Activated naive CD4-positive, alpha-beta T cell treated with anti-CD3 and anti-CD28 coated beads for 36 hours (primary cell): ENCODE measurements at regions of chr2 and their contacts with region 1.

Region 1: DNA sequence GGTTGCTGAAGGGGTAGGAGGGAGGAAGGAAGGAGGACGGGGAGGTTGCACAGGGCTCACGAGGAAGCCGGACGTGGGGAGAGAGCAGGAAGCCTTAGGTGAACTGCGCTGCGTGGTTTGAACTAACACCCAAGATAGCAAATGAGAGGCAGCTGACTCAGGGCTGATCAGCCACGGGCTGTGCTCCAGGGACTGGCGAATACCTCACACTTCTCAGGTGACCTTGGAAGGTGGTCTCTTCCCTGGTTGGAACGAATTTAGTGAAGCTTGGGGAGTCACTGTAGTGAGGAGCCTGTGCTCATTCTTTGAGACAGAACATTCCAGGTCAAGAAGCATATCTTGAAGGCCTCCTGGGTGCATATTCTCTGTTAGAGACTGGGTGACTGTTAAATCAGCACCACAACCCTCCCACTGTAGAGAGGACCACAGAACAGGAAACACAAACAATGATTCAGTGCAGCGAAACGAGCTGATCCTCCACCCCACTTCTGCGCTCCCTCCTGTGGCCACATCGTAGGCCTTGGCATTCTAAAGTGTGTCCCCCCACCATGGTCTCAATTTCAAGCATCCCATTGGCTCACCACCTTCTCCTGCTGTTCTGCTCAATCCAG is 33.8 kb downstream of the TOGARAM2 start:
- DNase-seq: peak; percentile 83
- H3K4me3 Mint-ChIP-seq: peak overlapping the region; percentile 80
- H3K27ac Mint-ChIP-seq: peak overlapping the region; percentile 90
- H3K4me1 Mint-ChIP-seq: peaks cover 76% of the 10 kb centered on the region
- H3K27me3 Mint-ChIP-seq: no peaks in the 10 kb centered on the region

Region 2: GRCh38 chr2:28030600-28030999 is 984.3 kb before region 1 on chr2:
- CTCF ChIA-PET with region 1: no interaction called
- intact Hi-C with region 1: loop called (anchors 10 kb)
- DNase-seq: no peak
- H3K4me3 Mint-ChIP-seq: no peak overlapping the region
- H3K27ac Mint-ChIP-seq: no peak overlapping the region
- H3K4me1 Mint-ChIP-seq: peaks cover 17% of the 10 kb centered on the region
- H3K27me3 Mint-ChIP-seq: no peaks in the 10 kb centered on the region

Region 3: DNA sequence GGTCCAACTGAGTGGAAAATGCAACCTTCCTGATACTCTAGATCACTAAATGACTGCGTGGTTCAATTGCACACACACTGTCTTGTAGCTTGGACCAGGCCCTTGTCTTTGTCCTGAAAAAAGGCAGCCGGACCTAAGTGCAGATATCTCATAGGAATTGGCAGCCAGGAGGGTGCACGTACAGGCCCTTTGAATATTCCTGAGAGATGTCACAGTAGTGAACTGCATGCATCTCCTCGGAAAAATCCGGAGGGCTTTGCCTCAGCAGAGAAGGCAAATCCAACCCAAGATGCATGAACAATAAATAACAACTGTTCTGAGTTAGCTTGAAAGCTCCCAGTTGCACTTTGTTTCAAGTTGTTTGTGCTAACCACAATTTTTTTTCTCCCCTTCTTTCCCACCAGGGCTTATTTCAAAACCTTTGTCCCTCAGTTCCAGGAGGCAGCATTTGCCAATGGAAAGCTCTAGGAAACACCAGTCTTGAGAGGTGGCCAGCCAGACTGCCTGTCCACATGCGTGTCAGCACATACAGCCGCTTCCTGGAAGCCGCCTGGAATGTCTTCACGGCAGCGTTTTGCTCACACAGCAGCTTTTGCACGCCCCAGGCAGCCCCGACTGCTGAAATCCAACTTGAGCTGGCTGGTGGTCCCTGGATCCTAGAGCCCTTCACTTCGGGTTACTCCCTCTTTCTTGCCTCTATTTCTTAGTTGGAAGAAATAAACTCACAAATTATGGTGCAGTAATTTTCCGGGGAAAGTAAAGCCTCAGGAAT is 676.7 kb before region 1 on chr2:
- CTCF ChIA-PET with region 1: no interaction called
- intact Hi-C with region 1: no loop called
- DNase-seq: no peak
- H3K4me3 Mint-ChIP-seq: no peak overlapping the region
- H3K27ac Mint-ChIP-seq: no peak overlapping the region
- H3K4me1 Mint-ChIP-seq: no peaks in the 10 kb centered on the region
- H3K27me3 Mint-ChIP-seq: no peaks in the 10 kb centered on the region

Region 4: GRCh38 chr2:28778392-28778791 is 236.5 kb before region 1 on chr2:
- CTCF ChIA-PET with region 1: no interaction called
- intact Hi-C with region 1: no loop called
- DNase-seq: no peak
- H3K4me3 Mint-ChIP-seq: no peak overlapping the region
- H3K27ac Mint-ChIP-seq: peak overlapping the region; percentile 10
- H3K4me1 Mint-ChIP-seq: peaks cover 37% of the 10 kb centered on the region
- H3K27me3 Mint-ChIP-seq: no peaks in the 10 kb centered on the region

Region 5: GRCh38 chr2:28821295-28821958 is 193.5 kb before region 1 on chr2:
- CTCF ChIA-PET with region 1: interaction called, 7 read pairs
- intact Hi-C with region 1: loop called (anchors 1 kb)
- DNase-seq: peak; percentile 81
- H3K4me3 Mint-ChIP-seq: no peak overlapping the region
- H3K27ac Mint-ChIP-seq: no peak overlapping the region
- H3K4me1 Mint-ChIP-seq: peaks cover 8% of the 10 kb centered on the region
- H3K27me3 Mint-ChIP-seq: no peaks in the 10 kb centered on the region

Region 6: DNA sequence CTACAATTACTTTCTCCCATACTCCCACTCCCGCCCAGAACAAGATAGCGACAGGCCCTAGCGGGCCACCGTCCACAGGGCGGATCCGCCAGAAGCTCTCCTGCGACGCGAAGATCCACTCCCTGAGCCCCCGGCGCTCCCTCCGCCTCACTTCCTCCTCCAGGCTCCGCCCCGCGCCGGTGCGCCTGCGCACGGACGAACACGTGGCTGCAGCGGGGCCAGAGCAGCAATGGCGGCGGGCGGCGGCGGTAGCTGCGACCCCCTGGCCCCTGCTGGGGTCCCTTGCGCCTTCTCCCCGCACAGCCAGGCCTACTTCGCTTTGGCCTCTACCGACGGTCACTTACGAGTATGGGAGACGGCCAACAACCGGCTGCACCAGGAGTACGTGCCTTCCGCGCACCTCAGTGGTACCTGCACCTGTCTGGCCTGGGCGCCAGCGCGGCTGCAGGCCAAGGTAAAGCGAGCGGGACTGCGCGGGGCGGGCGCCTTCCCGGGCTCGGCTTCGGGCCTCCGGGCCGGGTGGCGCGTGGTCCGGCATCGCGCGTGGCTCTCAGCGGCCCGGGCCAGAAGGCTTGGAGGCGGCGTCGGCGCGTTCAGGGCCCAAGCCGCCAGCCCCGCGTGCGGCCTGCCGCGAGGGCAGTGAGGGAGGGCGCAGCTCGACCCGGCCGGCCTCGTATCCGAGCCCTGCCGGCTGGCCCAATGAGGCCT is 120.3 kb before region 1 on chr2 and contains the start of gene WDR43:
- CTCF ChIA-PET with region 1: interaction called, 3 read pairs
- intact Hi-C with region 1: loop called (anchors 2 kb)
- DNase-seq: peak; percentile 97
- H3K4me3 Mint-ChIP-seq: peak within 1 kb of the TSS; percentile 100
- H3K27ac Mint-ChIP-seq: peak within 1 kb of the TSS; percentile 97
- H3K4me1 Mint-ChIP-seq: peaks cover 34% of the 10 kb centered on the region
- H3K27me3 Mint-ChIP-seq: no peaks in the 10 kb centered on the region
- total RNA-seq, gene WDR43: 76.5 to 78.7 TPM

Region 7: GRCh38 chr2:29000481-29000880 is 14.4 kb before region 1 on chr2:
- CTCF ChIA-PET with region 1: interaction called, 11 read pairs
- intact Hi-C with region 1: no loop called
- DNase-seq: peak; percentile 48
- H3K4me3 Mint-ChIP-seq: no peak overlapping the region
- H3K27ac Mint-ChIP-seq: no peak overlapping the region
- H3K4me1 Mint-ChIP-seq: peaks cover 16% of the 10 kb centered on the region
- H3K27me3 Mint-ChIP-seq: no peaks in the 10 kb centered on the region

Region 8: DNA sequence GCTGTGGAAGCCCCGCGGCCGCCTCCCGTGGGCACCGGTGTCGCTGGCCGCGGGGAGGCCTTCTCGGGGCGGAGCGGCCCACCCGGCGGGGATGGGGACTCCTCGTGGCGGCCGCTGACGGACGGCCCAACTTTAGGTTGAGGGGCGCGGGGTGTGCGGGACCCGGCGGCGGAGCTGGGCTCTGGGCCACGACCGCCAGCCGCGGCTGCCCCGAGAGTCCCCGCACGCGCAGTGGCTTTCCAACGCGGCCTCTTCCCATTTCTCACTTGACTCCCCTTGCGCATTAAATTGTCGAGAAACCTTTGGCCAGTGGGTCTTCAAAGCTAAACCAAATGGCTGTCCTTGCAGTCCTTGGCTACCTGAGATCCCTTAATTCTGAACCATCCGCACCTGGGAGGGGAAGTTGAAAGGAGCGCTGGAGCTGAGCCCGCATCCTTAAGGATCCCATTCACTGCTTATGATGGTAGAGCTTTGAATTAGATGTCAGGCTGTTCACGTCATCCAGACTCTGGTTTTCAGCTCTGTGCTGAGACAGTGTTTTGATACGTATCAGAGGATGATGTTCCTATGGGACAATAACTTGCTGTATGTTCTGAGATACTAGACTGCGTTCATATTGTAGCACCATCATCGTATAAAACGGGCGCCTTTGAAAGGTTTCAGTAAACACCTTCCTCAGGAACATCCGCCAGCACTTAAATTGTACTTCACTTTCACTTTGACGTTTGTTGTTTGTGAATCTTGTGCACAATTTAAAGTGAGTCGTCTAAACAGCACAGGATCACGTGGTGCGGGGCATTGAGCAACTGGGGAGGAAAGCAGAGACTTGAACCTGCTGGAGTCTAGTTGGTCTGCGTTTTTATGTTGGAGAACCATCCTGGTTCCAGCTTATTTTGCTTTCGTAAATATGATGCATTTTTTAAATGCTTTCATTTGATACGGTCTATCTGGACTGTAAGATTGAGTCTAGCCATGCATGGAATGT is 101.2 kb after region 1 on chr2:
- CTCF ChIA-PET with region 1: interaction called, 3 read pairs
- intact Hi-C with region 1: loop called (anchors 1 kb)
- DNase-seq: peak; percentile 90
- H3K4me3 Mint-ChIP-seq: peak overlapping the region; percentile 90
- H3K27ac Mint-ChIP-seq: peak overlapping the region; percentile 87
- H3K4me1 Mint-ChIP-seq: peaks cover 52% of the 10 kb centered on the region
- H3K27me3 Mint-ChIP-seq: peaks cover 3% of the 10 kb centered on the region

Region 9: GRCh38 chr2:29139152-29139551 is 124.2 kb after region 1 on chr2:
- CTCF ChIA-PET with region 1: no interaction called
- intact Hi-C with region 1: no loop called
- DNase-seq: no peak
- H3K4me3 Mint-ChIP-seq: no peak overlapping the region
- H3K27ac Mint-ChIP-seq: no peak overlapping the region
- H3K4me1 Mint-ChIP-seq: peaks cover 12% of the 10 kb centered on the region
- H3K27me3 Mint-ChIP-seq: no peaks in the 10 kb centered on the region

Region 10: DNA sequence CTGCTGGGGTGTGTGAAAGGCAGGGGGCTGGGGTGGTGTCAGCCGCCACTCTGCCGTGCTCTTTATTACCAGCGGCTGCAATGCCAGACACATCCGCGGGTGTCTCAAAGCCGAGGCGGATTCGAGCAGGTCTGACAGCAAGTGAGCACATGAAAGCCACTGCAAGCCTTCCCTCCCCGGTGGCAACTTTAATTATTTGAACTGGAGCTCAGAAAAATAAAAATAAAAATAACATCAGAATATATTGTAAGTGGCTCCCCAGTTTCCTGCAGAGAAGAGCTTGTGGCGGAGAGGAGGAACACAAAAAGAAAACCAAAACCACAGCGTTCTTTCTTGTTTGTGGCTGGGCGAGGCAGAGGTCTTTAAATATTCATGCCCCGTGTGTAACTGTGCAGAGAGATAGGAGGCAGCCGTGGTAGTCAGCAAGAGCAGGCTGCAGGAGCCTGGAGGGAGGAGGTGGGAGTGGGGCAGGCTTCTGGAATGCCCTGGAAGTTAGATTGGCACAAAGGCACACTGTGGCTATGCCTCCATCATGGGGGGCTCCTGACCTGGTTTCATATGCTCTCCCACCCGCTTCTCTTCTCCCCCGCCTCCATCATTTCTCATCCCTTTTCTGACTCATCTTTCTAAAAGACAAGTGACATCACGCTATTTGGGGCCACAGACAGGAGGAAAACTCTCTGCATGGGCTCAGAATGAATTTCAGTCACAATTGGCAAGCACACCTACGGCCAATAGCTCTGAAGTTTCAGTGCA is 300.1 kb after region 1 on chr2:
- CTCF ChIA-PET with region 1: no interaction called
- intact Hi-C with region 1: loop called (anchors 5 kb)
- DNase-seq: peak; percentile 76
- H3K4me3 Mint-ChIP-seq: peak overlapping the region; percentile 63
- H3K27ac Mint-ChIP-seq: peak overlapping the region; percentile 63
- H3K4me1 Mint-ChIP-seq: peaks cover 33% of the 10 kb centered on the region
- H3K27me3 Mint-ChIP-seq: peaks cover 36% of the 10 kb centered on the region

Region 11: GRCh38 chr2:30541680-30542079 is 1526.8 kb after region 1 on chr2:
- CTCF ChIA-PET with region 1: no interaction called
- intact Hi-C with region 1: no loop called
- DNase-seq: no peak
- H3K4me3 Mint-ChIP-seq: no peak overlapping the region
- H3K27ac Mint-ChIP-seq: no peak overlapping the region
- H3K4me1 Mint-ChIP-seq: peaks cover 15% of the 10 kb centered on the region
- H3K27me3 Mint-ChIP-seq: no peaks in the 10 kb centered on the region